ENCODE measurements at regions of chr4 and their contacts with region 1.

Region 1: DNA sequence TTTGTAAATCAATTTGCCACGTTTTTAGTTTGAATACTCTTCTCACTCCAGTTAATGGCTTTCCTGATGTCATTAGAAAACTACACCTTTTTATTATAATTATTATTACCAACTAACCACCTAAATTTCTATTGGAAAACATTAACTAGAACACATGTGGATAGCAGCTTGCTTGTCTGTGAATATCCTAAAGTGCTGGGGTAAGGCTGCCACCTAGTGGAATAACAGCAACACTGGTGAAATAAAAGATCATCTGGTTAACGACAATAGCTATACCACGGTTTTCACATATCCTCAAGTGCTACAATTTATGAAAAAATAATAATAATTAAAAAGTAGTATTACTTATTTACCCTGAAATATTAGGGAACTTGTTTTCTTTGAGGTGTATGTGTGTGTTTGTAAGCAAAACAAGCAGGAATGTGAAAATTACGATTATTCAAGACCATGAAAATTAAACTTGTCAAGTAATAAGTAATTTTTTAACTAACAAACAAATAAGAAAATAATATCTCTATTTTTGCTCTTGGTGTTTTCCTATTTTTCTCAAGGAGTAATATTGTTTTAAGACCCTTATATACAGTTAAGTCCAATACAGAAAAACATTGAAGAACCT is 130.1 kb upstream of the TECRL start:
- DNase-seq: no peak
- ATAC-seq: peak; percentile 76

Region 2: DNA sequence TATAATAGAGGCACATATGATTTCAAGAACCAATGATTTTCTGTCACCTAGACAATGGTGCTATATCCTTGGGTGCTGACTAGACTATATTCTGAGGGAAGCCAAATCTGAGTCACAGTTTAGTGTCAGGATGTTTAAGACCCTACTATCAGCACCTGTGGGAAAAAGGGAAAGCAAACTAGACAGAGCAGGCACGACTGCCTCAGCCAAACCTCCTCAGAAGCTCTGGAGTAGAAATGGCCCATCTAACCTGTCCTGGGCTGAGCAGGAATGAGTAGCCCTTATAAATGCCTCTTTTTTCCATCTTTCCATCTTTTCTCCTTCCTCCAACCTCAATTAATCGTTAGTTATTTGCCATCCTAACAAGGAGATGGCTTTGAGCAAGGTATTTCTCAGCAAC is 49.7 kb before region 1 on chr4:
- intact Hi-C with region 1: loop called (anchors 10 kb)
- DNase-seq: no peak
- ATAC-seq: no peak

Region 3: GRCh38 chr4:64503945-64504697 is 35.2 kb before region 1 on chr4:
- intact Hi-C with region 1: no loop called
- DNase-seq: no peak
- ATAC-seq: no peak

Region 4: DNA sequence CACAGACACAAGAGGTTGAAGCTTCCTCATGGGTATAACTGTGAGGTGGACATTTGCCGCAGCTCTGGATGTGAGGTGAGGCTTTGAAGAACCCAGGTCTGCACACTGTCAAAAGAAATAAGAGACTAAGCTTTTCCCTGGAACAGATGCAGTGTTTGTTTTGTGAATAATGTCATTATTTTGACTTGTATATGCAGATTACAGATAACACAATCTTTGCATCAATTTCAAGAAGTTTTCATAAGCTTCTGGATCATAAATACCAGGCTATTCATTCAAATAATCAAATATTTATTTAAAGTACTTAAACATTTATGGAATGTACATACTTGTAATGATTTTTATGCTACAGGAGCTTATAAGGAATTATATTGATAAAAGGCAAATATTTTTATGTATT is 956.1 kb after region 1 on chr4:
- intact Hi-C with region 1: no loop called
- DNase-seq: no peak
- ATAC-seq: no peak